Activated T-helper 2 cell treated with anti-CD3 and anti-CD28 coated beads, Interferon-gamma antibody, Interleukin-2, Interleukin-4, amounts not matched to agents 10 μg/mL and 5 μg/mL and 100 μg/mL, durations not matched to agents 14 hours and 24 hours and 36 hours (primary cell): ENCODE measurements at regions of chr1 and their contacts with region 1.

Region 1: DNA sequence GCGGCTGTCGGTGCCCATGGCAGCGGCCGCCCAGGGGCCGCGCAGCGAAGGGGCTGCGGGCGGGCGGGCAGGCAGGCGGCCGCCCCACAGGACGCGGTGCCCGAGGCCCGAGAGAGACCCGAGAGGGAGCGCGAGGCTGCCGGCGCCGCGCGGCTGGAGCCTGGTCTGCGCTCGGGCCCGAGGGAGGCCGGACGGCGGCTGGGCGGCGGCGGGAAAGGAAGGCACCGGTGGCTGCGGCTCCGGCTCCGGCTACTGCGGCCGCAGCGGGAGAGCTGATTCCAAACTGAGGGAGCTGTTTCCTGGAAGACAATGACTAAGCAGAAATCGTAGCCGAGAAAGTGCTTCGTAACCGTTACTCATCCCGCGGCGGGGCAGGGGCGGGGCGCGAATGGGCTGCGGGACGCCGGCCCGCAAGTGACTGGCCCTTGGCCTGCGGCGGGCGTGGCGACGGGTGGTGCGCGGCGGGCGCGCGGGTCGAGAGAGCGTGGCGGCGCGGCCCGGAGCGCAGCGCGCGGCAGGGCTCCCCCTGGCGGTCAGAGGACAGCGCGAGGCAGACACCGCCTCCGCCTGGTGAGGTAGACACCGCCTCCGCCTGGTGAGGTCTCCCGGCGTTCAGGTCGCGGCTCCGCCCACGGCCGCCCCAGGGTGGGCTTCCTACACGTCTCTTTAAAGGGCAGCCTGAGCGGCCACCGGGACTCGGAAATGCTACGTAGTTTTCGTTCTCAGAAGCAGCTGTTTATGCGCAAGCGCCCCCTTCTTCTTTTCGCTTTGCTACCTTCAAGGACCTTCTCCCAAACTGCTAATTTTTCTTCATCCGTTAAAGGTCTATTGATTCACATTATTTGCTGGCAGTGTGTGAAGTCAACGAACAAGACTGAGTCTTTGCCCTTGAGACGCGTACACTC is at the start of gene GCLM:
- DNase-seq: peak; percentile 86
- H3K4me3 Mint-ChIP-seq: peak within 1 kb of the TSS; percentile 97
- H3K27ac Mint-ChIP-seq: peak within 1 kb of the TSS; percentile 86
- H3K4me1 Mint-ChIP-seq: peaks cover 30% of the 10 kb centered on the region
- H3K27me3 Mint-ChIP-seq: peaks cover 20% of the 10 kb centered on the region
- total RNA-seq, gene GCLM: 18.1 and 20.5 TPM in 2 replicates

Region 2: DNA sequence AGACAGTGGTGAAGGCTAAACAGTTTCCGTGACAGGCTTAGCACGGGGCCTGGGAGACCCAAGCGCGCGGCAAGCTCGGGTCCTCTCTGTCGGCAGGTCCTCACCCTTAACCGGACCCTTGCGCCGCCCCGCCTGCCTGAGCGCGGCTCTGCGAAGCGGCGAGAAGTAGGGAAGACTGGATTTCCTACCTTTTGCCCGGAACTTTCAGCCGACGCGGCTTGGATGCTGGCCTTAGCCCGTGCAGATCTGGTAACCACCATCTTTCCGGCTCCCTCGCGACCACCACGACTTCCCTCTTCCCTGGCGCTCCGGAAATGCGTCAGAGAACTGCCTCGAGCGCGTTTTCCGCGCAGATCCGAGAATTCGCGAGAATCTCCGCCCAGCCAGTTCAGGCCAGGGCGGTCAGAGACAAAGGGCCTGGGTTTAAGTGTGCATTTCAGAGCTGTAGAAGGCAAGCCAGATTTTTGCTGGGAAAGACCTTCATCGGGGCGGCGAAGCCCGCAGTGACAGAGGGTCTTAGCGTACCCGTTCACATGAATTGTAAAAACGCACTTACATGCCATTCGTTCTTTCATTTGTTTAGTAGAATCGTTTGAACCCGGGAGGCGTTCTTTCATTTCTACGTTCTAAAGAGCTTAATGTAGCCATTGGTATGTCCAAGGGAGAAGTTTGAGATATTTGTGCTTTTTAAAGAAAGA is 30.4 kb before region 1 on chr1 and contains the start of gene DNTTIP2:
- intact Hi-C with region 1: loop called (anchors 1 kb)
- DNase-seq: peak; percentile 86
- H3K4me3 Mint-ChIP-seq: peak within 1 kb of the TSS; percentile 94
- H3K27ac Mint-ChIP-seq: peak within 1 kb of the TSS; percentile 97
- H3K4me1 Mint-ChIP-seq: peaks cover 32% of the 10 kb centered on the region
- H3K27me3 Mint-ChIP-seq: no peaks in the 10 kb centered on the region
- total RNA-seq, gene DNTTIP2: 80.7 and 85.5 TPM in 2 replicates

Region 3: GRCh38 chr1:93980320-93981273 is 71.2 kb after region 1 on chr1:
- intact Hi-C with region 1: no loop called
- DNase-seq: no peak
- H3K4me3 Mint-ChIP-seq: no peak overlapping the region
- H3K27ac Mint-ChIP-seq: no peak overlapping the region
- H3K4me1 Mint-ChIP-seq: no peaks in the 10 kb centered on the region
- H3K27me3 Mint-ChIP-seq: peaks cover 28% of the 10 kb centered on the region

Region 4: DNA sequence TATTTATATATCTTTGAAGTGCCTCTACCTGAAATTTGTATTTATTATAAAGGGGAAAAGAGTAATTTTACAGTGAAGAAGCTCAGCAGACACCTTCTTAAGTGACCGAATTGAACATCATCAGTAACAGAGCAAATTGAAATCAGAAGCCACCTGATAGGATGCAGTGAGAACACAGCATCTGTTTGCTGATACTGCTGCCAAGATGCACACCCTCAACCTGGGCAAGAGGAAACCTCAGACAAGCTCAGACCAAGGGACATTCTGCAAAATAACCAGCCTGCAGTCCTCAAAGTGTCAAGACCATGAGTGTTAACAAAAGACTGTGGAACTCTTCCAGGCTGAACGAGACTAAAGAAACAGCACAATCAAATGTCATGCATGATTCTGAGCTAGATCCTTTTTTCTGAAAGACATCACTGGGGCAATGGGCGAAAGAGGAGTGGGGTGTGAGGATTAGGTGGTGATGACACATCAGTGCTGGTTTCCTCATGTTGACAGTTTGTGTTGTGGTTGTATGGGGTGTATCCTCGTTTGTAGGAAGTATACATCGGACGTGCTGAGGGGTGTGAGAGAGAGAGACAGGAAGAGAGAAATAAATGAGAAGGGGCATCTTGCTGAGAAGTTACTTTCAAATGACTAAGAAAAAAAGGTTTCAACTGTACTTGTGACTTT is 107.9 kb after region 1 on chr1:
- intact Hi-C with region 1: loop called (anchors 5 kb)
- DNase-seq: peak; percentile 41
- H3K4me3 Mint-ChIP-seq: peak overlapping the region; percentile 37
- H3K27ac Mint-ChIP-seq: peak overlapping the region; percentile 77
- H3K4me1 Mint-ChIP-seq: peaks cover 25% of the 10 kb centered on the region
- H3K27me3 Mint-ChIP-seq: peaks cover 6% of the 10 kb centered on the region